A673 (cell line): ENCODE measurements at regions of chr18 and their contacts with region 1.

Region 1: GRCh38 chr18:42053188-42053781 is 98.3 kb downstream of the PIK3C3 start:
- DNase-seq: peak; percentile 70
- H3K4me3 ChIP-seq: no peak overlapping the region
- H3K27ac ChIP-seq: peak overlapping the region; percentile 51
- H3K4me1 ChIP-seq: peaks cover 7% of the 10 kb centered on the region
- H3K27me3 ChIP-seq: no peaks in the 10 kb centered on the region
- CTCF ChIP-seq: peak; percentile 89

Region 2: DNA sequence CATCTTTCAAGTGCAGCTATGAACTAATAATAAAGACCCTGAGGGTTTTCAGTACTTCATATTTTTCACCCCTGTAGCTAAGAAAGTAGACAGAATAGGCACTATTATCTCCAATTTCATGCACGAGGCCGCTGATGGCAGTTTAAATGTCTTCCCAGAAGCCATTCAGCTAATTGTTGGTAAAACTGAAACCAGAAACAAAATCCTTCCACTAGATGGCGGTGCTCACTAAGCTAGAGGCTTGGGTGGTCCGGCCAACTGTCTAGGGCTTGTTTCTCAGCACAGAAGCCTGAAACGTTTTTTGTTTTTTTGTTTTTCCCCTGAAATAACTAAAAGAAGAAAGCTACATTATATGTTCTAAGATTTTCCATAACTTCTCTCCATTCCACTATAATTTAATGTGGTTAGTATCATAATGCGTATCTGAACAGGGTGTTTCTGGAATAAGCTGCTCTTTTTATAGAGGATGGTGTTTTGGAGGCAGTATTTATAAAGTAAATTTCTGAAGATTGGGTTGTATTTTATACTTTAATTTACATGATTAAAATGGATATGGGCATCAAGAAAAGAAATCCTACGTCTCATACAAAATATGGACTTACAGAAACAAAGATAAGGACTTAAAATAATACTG is 61.1 kb after region 1 on chr18:
- CTCF ChIA-PET with region 1: interaction called, 5 read pairs
- POLR2A ChIA-PET with region 1: no interaction called
- intact Hi-C with region 1: loop called (anchors 1 kb)
- DNase-seq: peak; percentile 92
- H3K4me3 ChIP-seq: no peak overlapping the region
- H3K27ac ChIP-seq: peak overlapping the region; percentile 91
- H3K4me1 ChIP-seq: peaks cover 26% of the 10 kb centered on the region
- H3K27me3 ChIP-seq: no peaks in the 10 kb centered on the region
- CTCF ChIP-seq: peak; percentile 88

Region 3: DNA sequence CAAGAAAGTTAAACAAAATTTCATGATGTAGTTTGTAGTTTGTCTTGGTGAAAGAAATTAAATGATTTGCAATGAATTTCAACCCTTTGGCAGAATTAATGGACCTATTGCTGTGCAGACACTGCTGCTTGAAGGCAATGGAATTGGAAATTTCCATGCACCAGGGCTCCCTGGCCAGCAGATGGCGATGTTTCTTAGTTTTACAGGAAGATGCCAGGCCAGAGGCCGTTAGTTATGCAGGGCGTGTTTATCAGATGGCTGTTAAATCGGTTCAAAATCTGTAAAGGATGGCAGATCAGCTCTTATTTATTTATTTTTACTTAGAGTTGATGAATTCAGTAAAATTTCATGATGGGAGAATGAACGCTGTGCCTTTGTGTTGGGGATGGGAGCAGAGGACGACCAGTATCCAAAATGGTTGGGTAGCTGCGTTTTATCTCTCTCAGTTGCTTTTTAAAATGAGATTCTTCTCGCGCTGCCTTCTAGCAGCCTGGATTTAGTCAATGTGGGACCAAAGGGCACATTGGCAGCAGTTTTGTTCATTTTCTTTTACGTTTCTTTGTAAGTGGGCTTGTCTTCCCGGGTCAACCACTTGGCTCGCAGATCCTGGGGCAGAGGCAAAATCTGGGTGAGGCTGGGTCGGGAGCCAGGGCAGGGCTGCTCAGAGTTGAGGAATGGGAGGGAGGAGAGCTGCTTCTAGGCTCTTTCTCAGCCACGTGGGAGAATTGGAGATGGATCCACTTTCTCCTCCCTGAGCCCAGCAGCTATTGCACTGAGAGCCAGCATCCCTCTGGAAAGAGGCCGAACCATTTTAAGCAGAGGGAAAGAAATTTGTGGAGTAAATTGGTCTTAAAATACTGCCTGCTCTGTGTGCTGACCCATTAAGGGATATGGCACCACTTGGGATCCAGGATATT is 245.7 kb after region 1 on chr18:
- CTCF ChIA-PET with region 1: no interaction called
- POLR2A ChIA-PET with region 1: no interaction called
- intact Hi-C with region 1: loop called (anchors 2 kb)
- DNase-seq: peak; percentile 87
- H3K4me3 ChIP-seq: no peak overlapping the region
- H3K27ac ChIP-seq: no peak overlapping the region
- H3K4me1 ChIP-seq: peaks cover 4% of the 10 kb centered on the region
- H3K27me3 ChIP-seq: no peaks in the 10 kb centered on the region
- CTCF ChIP-seq: peak; percentile 93

Region 4: GRCh38 chr18:43396266-43396665 is 1343.0 kb after region 1 on chr18:
- CTCF ChIA-PET with region 1: no interaction called
- POLR2A ChIA-PET with region 1: no interaction called
- intact Hi-C with region 1: loop called (anchors 10 kb)
- DNase-seq: peak; percentile 45
- H3K4me3 ChIP-seq: no peak overlapping the region
- H3K27ac ChIP-seq: no peak overlapping the region
- H3K4me1 ChIP-seq: no peaks in the 10 kb centered on the region
- H3K27me3 ChIP-seq: no peaks in the 10 kb centered on the region
- CTCF ChIP-seq: peak; percentile 67

Region 5: GRCh38 chr18:43587538-43588153 is 1534.4 kb after region 1 on chr18:
- CTCF ChIA-PET with region 1: interaction called, 3 read pairs
- POLR2A ChIA-PET with region 1: no interaction called
- intact Hi-C with region 1: loop called (anchors 5 kb)
- DNase-seq: peak; percentile 70
- H3K4me3 ChIP-seq: no peak overlapping the region
- H3K27ac ChIP-seq: peak overlapping the region; percentile 58
- H3K4me1 ChIP-seq: peaks cover 7% of the 10 kb centered on the region
- H3K27me3 ChIP-seq: no peaks in the 10 kb centered on the region
- CTCF ChIP-seq: peak; percentile 77